Mammary epithelial cell (primary cell): ENCODE measurements at regions of chr1 and their contacts with region 1.

Region 1: DNA sequence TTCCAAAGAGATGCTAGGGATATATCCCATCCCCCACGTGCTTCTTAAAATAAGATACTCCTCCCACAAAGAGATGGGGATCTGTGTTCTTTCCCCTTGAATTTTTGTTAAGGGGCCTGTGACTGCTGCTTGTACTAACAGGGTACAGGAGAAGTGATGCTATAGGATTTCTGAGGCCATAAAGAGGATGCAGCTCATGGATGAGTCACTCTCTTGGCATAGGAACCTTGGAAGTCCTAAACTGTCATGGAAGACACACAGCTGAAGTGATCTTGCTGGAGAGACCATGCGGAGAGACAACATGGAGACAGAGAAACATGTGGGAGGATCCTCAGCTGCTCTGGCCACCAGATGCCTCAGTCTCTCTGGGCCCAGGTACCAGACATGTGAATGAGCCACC is 157.2 kb downstream of the S1PR1 start:
- DNase-seq: no peak
- H3K4me3 ChIP-seq: no peak overlapping the region
- H3K27ac ChIP-seq: no peak overlapping the region
- H3K4me1 ChIP-seq: no peaks in the 10 kb centered on the region
- H3K27me3 ChIP-seq: peaks cover 4% of the 10 kb centered on the region
- CTCF ChIP-seq: no peak

Region 2: GRCh38 chr1:101317590-101317989 is 76.5 kb before region 1 on chr1:
- CTCF ChIA-PET with region 1: no interaction called
- dilution Hi-C with region 1: loop called (anchors 5 kb)
- in situ Hi-C with region 1: no loop called
- intact Hi-C with region 1: no loop called
- DNase-seq: no peak
- H3K4me3 ChIP-seq: no peak overlapping the region
- H3K27ac ChIP-seq: no peak overlapping the region
- H3K4me1 ChIP-seq: no peaks in the 10 kb centered on the region
- H3K27me3 ChIP-seq: peaks cover 10% of the 10 kb centered on the region
- CTCF ChIP-seq: no peak